ENCODE measurements at regions of chr11 and their contacts with region 1.

Region 1: DNA sequence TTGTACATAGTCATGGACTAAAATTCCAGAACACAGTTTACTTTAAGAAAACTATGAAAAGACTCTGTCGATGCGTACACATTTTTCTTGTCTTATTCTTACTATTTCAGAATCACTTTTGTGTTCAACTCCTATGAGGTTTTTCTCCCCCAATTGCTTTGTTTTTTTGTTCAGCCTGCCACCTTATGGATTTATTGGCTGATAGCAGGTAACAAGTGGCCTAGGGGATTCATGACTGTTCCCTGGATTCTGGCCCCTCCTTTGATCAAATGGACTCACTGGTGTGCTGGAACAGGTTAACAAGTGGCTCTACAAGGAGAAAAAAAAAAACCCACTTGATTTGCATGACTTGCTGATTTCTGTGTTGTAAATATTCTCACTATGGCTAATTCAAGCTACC is 10.6 kb downstream of the MMP20 start:
- DNase-seq: no peak
- H3K4me3 ChIP-seq: no peak overlapping the region
- H3K4me3 Mint-ChIP-seq: no peak overlapping the region
- H3K27ac ChIP-seq: no peak overlapping the region
- H3K27ac Mint-ChIP-seq: peak overlapping the region in 1 of 7 donors; percentile 15
- H3K4me1 ChIP-seq: no peaks in the 10 kb centered on the region
- H3K4me1 Mint-ChIP-seq: peaks cover 0 to 3% (median under 1%) of the 10 kb centered on the region in 4 donors
- H3K27me3 ChIP-seq: no peaks in the 10 kb centered on the region
- H3K27me3 Mint-ChIP-seq: peaks cover 2 to 3% of the 10 kb centered on the region in 2 donors

Region 2: DNA sequence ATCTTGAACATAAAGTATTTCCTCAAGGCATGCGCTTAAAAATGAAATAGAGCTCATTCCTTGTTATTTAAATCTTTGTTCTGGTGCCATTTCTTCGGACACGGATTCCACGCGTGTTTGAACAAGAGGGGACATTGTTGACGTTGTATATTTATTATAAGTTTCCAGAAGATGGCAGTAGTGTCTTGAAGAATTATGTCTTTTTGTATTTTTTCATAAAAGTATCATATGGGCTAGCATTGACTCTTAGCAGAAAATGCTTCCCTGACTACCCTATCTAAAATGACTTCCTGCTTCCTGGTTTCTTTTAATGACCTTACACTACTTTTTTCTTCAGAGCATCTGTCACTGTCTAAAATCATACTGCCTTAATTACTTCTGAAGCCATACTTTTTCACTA is 247.1 kb before region 1 on chr11:
- CTCF ChIA-PET with region 1: interaction called, 19 read pairs
- POLR2A ChIA-PET with region 1: no interaction called
- intact Hi-C with region 1: loop called (anchors 2 kb)
- DNase-seq: peak in 4 of 5 donors; percentile 41 to 53 (median 50)
- H3K4me3 ChIP-seq: no peak overlapping the region
- H3K4me3 Mint-ChIP-seq: peak overlapping the region in 3 of 8 donors; percentile 7 to 27 (median 17)
- H3K27ac ChIP-seq: no peak overlapping the region
- H3K27ac Mint-ChIP-seq: peak overlapping the region; percentile 33 to 93 (median 72)
- H3K4me1 ChIP-seq: peaks cover 21% of the 10 kb centered on the region
- H3K4me1 Mint-ChIP-seq: peaks cover 27 to 37% (median 28%) of the 10 kb centered on the region in 4 donors
- H3K27me3 ChIP-seq: no peaks in the 10 kb centered on the region
- H3K27me3 Mint-ChIP-seq: no peaks in the 10 kb centered on the region

Region 3: DNA sequence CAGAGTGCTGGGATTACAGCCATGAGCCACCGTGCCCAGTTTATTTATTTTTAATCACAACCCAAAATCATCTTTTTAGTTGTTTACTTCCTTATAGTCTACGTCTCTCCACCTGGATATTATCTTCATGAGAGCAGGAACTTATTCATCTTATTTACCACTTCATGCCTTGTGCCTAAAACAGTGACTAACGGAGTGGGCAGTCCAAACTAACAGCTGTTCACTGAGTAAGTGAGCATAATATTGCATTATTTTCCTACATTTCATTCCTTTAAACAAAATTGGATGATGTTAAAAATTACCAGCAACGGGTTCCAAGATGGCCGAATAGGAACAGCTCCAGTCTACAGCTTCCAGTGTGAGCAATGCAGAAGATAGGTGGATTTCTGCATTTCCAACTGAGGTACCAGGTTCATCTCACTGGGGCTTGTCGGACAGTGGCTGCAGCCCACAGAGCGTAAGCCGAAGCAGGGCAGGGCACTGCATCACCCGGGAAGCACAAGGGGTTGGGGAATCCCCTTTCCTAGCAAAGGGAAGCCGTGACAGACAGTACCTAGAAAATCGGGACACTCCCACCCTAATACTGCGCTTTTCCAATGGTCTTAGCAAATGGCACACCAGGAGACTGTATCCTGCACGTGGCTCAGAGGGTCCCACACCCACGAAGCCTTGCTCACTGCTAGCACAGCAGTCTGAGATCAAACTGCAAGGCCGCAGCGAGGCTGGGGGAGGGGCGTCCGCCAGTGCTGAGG is 176.0 kb before region 1 on chr11:
- CTCF ChIA-PET with region 1: no interaction called
- POLR2A ChIA-PET with region 1: no interaction called
- intact Hi-C with region 1: no loop called
- DNase-seq: no peak
- H3K4me3 ChIP-seq: no peak overlapping the region
- H3K4me3 Mint-ChIP-seq: peak overlapping the region; percentile 29 to 84 (median 59)
- H3K27ac ChIP-seq: peak overlapping the region; percentile 15
- H3K27ac Mint-ChIP-seq: peak overlapping the region; percentile 36 to 89 (median 75)
- H3K4me1 ChIP-seq: peaks cover 57% of the 10 kb centered on the region
- H3K4me1 Mint-ChIP-seq: peaks cover 58 to 88% (median 76%) of the 10 kb centered on the region in 4 donors
- H3K27me3 ChIP-seq: no peaks in the 10 kb centered on the region
- H3K27me3 Mint-ChIP-seq: no peaks in the 10 kb centered on the region

Region 4: GRCh38 chr11:102495161-102496042 is 119.1 kb before region 1 on chr11:
- CTCF ChIA-PET with region 1: interaction called, 19 read pairs
- POLR2A ChIA-PET with region 1: no interaction called
- intact Hi-C with region 1: loop called (anchors 1 kb)
- DNase-seq: peak; percentile 59 to 75 (median 73)
- H3K4me3 ChIP-seq: no peak overlapping the region
- H3K4me3 Mint-ChIP-seq: peak overlapping the region in 1 of 8 donors; percentile 6
- H3K27ac ChIP-seq: no peak overlapping the region
- H3K27ac Mint-ChIP-seq: no peak overlapping the region
- H3K4me1 ChIP-seq: peaks cover 4% of the 10 kb centered on the region
- H3K4me1 Mint-ChIP-seq: peaks cover 0 to 7% (median 5%) of the 10 kb centered on the region in 4 donors
- H3K27me3 ChIP-seq: peaks cover 4% of the 10 kb centered on the region
- H3K27me3 Mint-ChIP-seq: peaks cover 5 to 7% of the 10 kb centered on the region in 2 donors

Region 5: GRCh38 chr11:102603091-102603490 is 11.4 kb before region 1 on chr11:
- CTCF ChIA-PET with region 1: interaction called, 23 read pairs
- POLR2A ChIA-PET with region 1: no interaction called
- intact Hi-C with region 1: no loop called
- DNase-seq: no peak
- H3K4me3 ChIP-seq: no peak overlapping the region
- H3K4me3 Mint-ChIP-seq: no peak overlapping the region
- H3K27ac ChIP-seq: no peak overlapping the region
- H3K27ac Mint-ChIP-seq: no peak overlapping the region
- H3K4me1 ChIP-seq: no peaks in the 10 kb centered on the region
- H3K4me1 Mint-ChIP-seq: peaks cover 0 to 2% (median 0%) of the 10 kb centered on the region in 4 donors
- H3K27me3 ChIP-seq: no peaks in the 10 kb centered on the region
- H3K27me3 Mint-ChIP-seq: peaks cover 2 to 9% of the 10 kb centered on the region in 2 donors

Measured in CD4-positive, alpha-beta memory T cell (primary cell).